Activated CD4-positive, alpha-beta T cell treated with anti-CD3 and anti-CD28 coated beads, Interleukin-2, amount 10 ng/mL, durations not matched to agents 24 days and 14 days (primary cell): ENCODE measurements at regions of chr2 and their contacts with region 1.

Region 1: DNA sequence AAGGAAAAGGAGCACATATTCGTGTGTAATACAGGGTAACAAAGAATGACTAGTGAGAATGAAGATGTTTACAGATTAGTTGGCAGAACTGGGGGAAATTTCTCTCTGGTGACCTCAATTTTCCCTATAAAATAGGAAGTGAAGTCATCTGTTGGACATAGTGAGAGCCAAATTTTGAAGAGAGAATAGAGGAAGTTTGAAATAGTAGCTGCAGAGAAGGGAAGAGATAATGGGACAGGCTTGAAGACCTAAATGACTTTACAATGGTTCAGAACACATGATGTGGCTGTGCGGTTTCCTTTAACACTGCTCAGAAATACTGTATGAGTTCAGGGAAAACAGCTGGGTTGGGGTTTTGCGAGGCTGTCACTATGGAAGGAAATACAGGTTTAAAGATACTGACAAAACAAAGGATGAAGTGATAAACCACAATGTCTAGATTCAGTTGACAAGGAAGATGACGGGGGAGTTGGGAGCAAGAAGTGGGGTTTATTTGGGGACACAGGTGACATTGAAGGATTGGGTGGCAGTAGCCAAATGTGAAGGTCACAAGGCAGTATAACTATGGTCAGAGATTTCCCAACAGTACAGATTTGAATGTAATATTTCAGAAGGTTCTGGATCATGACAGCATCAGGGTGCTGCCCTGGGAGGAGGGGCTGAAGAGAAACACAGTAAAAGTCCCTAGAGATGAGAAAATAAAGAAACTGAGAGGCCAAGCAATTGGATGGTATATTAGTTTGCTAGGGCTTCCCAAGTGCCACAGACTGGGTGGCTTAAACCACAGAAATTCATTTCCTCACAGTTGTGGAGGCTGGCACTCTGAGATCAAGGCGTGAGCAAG is 82.6 kb upstream of the TANK start:
- DNase-seq: peak; percentile 95
- H3K4me3 Mint-ChIP-seq: peak overlapping the region; percentile 40
- H3K27ac Mint-ChIP-seq: peak overlapping the region; percentile 90
- H3K4me1 Mint-ChIP-seq: peaks cover 50% of the 10 kb centered on the region
- H3K27me3 Mint-ChIP-seq: no peaks in the 10 kb centered on the region

Region 2: GRCh38 chr2:160332318-160332717 is 745.3 kb before region 1 on chr2:
- intact Hi-C with region 1: loop called (anchors 5 kb)
- DNase-seq: peak; percentile 71
- H3K4me3 Mint-ChIP-seq: peak overlapping the region; percentile 33
- H3K27ac Mint-ChIP-seq: peak overlapping the region; percentile 66
- H3K4me1 Mint-ChIP-seq: peaks cover 77% of the 10 kb centered on the region
- H3K27me3 Mint-ChIP-seq: no peaks in the 10 kb centered on the region

Region 3: GRCh38 chr2:160516547-160517365 is 560.8 kb before region 1 on chr2:
- intact Hi-C with region 1: loop called (anchors 5 kb)
- DNase-seq: peak; percentile 59
- H3K4me3 Mint-ChIP-seq: peak overlapping the region; percentile 42
- H3K27ac Mint-ChIP-seq: peak overlapping the region; percentile 84
- H3K4me1 Mint-ChIP-seq: peaks cover 29% of the 10 kb centered on the region
- H3K27me3 Mint-ChIP-seq: no peaks in the 10 kb centered on the region

Region 4: GRCh38 chr2:161122772-161123530 is 45.4 kb after region 1 on chr2:
- intact Hi-C with region 1: loop called (anchors 1 kb)
- DNase-seq: peak; percentile 69
- H3K4me3 Mint-ChIP-seq: peak overlapping the region; percentile 1
- H3K27ac Mint-ChIP-seq: peak overlapping the region; percentile 42
- H3K4me1 Mint-ChIP-seq: peaks cover 20% of the 10 kb centered on the region
- H3K27me3 Mint-ChIP-seq: no peaks in the 10 kb centered on the region

Region 5: GRCh38 chr2:161166538-161167409 is 89.2 kb after region 1 on chr2:
- intact Hi-C with region 1: loop called (anchors 1 kb)
- DNase-seq: peak; percentile 90
- H3K4me3 Mint-ChIP-seq: peak overlapping the region; percentile 69
- H3K27ac Mint-ChIP-seq: peak overlapping the region; percentile 94
- H3K4me1 Mint-ChIP-seq: peaks cover 76% of the 10 kb centered on the region
- H3K27me3 Mint-ChIP-seq: no peaks in the 10 kb centered on the region

Region 6: GRCh38 chr2:161954103-161954502 is 876.5 kb after region 1 on chr2:
- intact Hi-C with region 1: loop called (anchors 5 kb)
- DNase-seq: peak; percentile 78
- H3K4me3 Mint-ChIP-seq: peak overlapping the region; percentile 50
- H3K27ac Mint-ChIP-seq: peak overlapping the region; percentile 86
- H3K4me1 Mint-ChIP-seq: peaks cover 57% of the 10 kb centered on the region
- H3K27me3 Mint-ChIP-seq: no peaks in the 10 kb centered on the region

Region 7: GRCh38 chr2:162073888-162074645 is 996.5 kb after region 1 on chr2 and contains the start of gene DPP4:
- intact Hi-C with region 1: loop called (anchors 5 kb)
- DNase-seq: peak; percentile 89
- H3K4me3 Mint-ChIP-seq: peak within 1 kb of the TSS; percentile 95
- H3K27ac Mint-ChIP-seq: peak within 1 kb of the TSS; percentile 96
- H3K4me1 Mint-ChIP-seq: peaks cover 46% of the 10 kb centered on the region
- H3K27me3 Mint-ChIP-seq: no peaks in the 10 kb centered on the region
- total RNA-seq, gene DPP4: 65.4 and 68.0 TPM in 2 replicates